GM23248 (cell line): ENCODE measurements at regions of chr11 and their contacts with region 1.

Region 1: DNA sequence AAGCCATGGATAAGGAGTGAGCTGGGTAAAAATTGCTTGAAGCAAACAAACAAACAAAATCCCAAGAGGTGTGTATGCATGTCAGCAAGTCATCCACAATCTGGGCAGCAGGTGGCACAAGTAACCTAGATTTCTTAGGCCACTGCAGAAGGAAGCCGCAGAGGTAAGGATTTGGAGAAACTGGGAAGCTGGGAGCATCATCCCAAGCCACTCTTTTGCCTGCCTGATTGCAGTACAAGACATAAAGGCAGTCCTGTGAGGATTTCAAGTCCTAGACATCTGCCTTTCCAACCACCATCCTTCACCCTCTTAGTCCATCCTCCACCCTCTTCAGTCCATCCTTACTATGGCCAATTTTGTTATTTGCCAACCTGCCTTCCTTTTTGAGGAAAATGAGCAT is 67.2 kb upstream of the BMAL1 start:
- DNase-seq: peak; percentile 87
- H3K4me3 ChIP-seq: no peak overlapping the region
- H3K27ac ChIP-seq: no peak overlapping the region
- H3K4me1 ChIP-seq: peaks cover 35% of the 10 kb centered on the region
- H3K27me3 ChIP-seq: no peaks in the 10 kb centered on the region

Region 2: GRCh38 chr11:13335319-13335718 is 124.9 kb after region 1 on chr11:
- in situ Hi-C with region 1: loop called (anchors 5 kb)
- DNase-seq: peak; percentile 81
- H3K4me3 ChIP-seq: no peak overlapping the region
- H3K27ac ChIP-seq: peak overlapping the region; percentile 89
- H3K4me1 ChIP-seq: peaks cover 77% of the 10 kb centered on the region
- H3K27me3 ChIP-seq: no peaks in the 10 kb centered on the region

Region 3: GRCh38 chr11:13577881-13578280 is 367.5 kb after region 1 on chr11:
- in situ Hi-C with region 1: no loop called
- DNase-seq: no peak
- H3K4me3 ChIP-seq: no peak overlapping the region
- H3K27ac ChIP-seq: no peak overlapping the region
- H3K4me1 ChIP-seq: no peaks in the 10 kb centered on the region
- H3K27me3 ChIP-seq: no peaks in the 10 kb centered on the region